Heart right ventricle (tissue), 16 donors: ENCODE measurements at regions of chr20 and their contacts with region 1.

Region 1: DNA sequence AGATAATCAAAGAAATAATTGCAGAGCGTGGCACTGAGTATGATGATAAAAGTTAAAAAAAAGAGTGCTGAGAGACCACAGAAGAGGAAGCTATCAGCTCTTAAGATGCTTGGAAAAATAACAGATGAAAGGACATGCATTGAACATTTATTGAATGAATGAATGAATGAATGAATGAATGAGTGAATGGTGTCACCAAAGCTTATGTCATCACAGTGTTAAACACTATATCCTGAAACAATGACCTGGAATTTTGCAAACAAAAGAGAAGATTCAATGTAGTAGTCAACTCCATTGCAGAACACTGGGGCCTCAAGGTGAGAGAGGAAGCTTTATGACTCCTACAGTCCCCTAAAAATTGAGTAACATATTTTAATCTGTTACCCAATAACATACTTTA is 477.4 kb upstream of the FLRT3 start:
- DNase-seq: no peak
- ATAC-seq: no peak
- H3K4me3 ChIP-seq: no peak overlapping the region
- H3K27ac ChIP-seq: no peak overlapping the region
- H3K4me1 ChIP-seq: no peaks in the 10 kb centered on the region
- H3K27me3 ChIP-seq: no peaks in the 10 kb centered on the region
- CTCF ChIP-seq: no peak

Region 2: DNA sequence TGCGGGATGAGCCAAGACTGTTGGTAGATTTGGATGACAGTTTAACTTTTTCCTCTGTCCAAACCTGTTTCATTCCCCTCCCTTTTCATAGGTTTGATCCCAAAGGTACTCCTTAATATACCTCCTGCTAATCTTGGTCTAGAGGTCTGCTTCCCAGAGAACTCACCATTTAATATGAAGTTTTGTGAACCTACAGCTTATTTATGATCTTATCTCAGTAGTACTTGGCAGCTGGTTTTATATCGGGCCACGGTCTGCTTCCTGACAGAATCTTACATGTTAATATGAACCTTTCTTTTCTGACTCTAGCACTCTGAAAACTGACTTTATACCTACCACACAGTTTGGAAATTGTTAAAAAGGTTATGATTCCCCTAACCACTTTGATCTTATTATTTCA is 680.8 kb before region 1 on chr20:
- intact Hi-C with region 1: no loop called
- DNase-seq: no peak
- ATAC-seq: no peak
- H3K4me3 ChIP-seq: no peak overlapping the region
- H3K27ac ChIP-seq: no peak overlapping the region
- H3K4me1 ChIP-seq: no peaks in the 10 kb centered on the region
- H3K27me3 ChIP-seq: no peaks in the 10 kb centered on the region
- CTCF ChIP-seq: no peak

Region 3: GRCh38 chr20:15396900-15397299 is 582.1 kb after region 1 on chr20:
- intact Hi-C with region 1: loop called in 1 of 10 experiments (anchors 5 kb)
- DNase-seq: no peak
- ATAC-seq: no peak
- H3K4me3 ChIP-seq: no peak overlapping the region
- H3K27ac ChIP-seq: no peak overlapping the region
- H3K4me1 ChIP-seq: no peaks in the 10 kb centered on the region
- H3K27me3 ChIP-seq: no peaks in the 10 kb centered on the region
- CTCF ChIP-seq: no peak